SK-N-SH (cell line): ENCODE measurements at regions of chr17 and their contacts with region 1.

Region 1: GRCh38 chr17:43132117-43132516 is 7.0 kb upstream of the BRCA1 start:
- DNase-seq: no peak
- H3K4me3 ChIP-seq: no peak overlapping the region
- H3K27ac ChIP-seq: no peak overlapping the region
- H3K4me1 ChIP-seq: no peaks in the 10 kb centered on the region; a peak in 1 of 4 replicates
- H3K27me3 ChIP-seq: no peaks in the 10 kb centered on the region
- CTCF ChIP-seq: no peak
- EP300 ChIP-seq: no peak
- RAD21 ChIP-seq: no peak

Region 2: DNA sequence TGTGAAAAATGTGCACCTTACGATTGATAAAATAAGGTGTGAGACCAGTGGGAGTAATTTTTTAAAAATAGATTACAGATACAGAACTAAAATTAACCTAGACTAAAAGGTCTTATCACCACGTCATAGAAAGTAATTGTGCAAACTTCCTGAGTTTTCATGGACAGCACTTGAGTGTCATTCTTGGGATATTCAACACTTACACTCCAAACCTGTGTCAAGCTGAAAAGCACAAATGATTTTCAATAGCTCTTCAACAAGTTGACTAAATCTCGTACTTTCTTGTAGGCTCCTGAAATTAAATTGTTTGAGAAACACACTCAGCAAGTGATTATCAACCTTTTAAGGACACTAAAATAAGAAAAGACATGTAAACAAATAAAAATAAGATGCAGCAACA is 27.5 kb before region 1 on chr17:
- CTCF ChIA-PET with region 1: no interaction called
- POLR2A ChIA-PET with region 1: no interaction called
- DNase-seq: no peak
- H3K4me3 ChIP-seq: no peak overlapping the region
- H3K27ac ChIP-seq: no peak overlapping the region
- H3K4me1 ChIP-seq: no peaks in the 10 kb centered on the region
- H3K27me3 ChIP-seq: no peaks in the 10 kb centered on the region
- CTCF ChIP-seq: no peak
- EP300 ChIP-seq: no peak
- RAD21 ChIP-seq: no peak

Region 3: DNA sequence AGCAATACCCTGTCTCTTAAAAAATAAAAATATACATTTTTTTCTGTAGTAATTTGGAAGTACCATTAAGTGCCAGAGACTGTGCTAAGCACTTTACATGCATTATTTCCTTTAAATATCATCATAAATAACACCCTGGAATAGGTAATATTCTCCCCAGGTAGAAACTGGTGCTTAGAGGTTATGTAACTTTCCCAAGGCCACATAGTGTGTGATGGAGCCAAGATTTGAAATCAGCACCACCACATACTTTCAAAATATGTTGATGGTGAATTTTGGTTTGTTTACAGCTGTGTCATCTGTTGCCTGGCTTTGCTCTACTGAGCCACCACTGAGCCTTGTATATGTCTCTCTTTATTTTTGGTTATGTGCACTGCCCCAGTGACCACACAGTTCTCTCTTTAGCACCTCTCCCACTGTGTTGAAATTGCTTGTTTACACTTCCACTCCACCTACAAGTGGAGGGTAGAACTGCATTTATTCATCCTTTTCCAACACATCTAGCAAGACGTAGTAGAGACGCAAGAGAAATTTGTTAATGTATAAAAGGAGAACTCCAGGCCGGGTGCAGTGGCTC is 19.9 kb after region 1 on chr17:
- CTCF ChIA-PET with region 1: no interaction called
- POLR2A ChIA-PET with region 1: interaction called, 12 read pairs
- DNase-seq: no peak
- H3K4me3 ChIP-seq: no peak overlapping the region
- H3K27ac ChIP-seq: no peak overlapping the region
- H3K4me1 ChIP-seq: no peaks in the 10 kb centered on the region
- H3K27me3 ChIP-seq: no peaks in the 10 kb centered on the region
- CTCF ChIP-seq: no peak
- EP300 ChIP-seq: no peak
- RAD21 ChIP-seq: no peak